H1 (cell line): ENCODE measurements at regions of chr5 and their contacts with region 1.

Region 1: GRCh38 chr5:154520861-154521453 is 42.9 kb upstream of the HAND1 start:
- DNase-seq: peak; percentile 82 to 93
- H3K4me3 ChIP-seq: peak overlapping the region; percentile 16 to 58 (median 36); a peak in 7 of 8 replicates
- H3K27ac ChIP-seq: peak overlapping the region; percentile 65; the same call in 1 of the 2 replicates
- H3K4me1 ChIP-seq: peaks cover 0 to 7% (median under 1%) of the 10 kb centered on the region in 4 experiments; a peak in 4 of 7 replicates
- H3K27me3 ChIP-seq: peaks cover 0 to 4% (median 3%) of the 10 kb centered on the region in 4 experiments; a peak in 2 of 7 replicates
- CTCF ChIP-seq: peak; percentile 79 to 83 (median 80)
- EP300 ChIP-seq: no peak
- POLR2A ChIP-seq: no peak
- RAD21 ChIP-seq: peak; percentile 59 to 72

Region 2: GRCh38 chr5:154345255-154345952 is 175.6 kb before region 1 on chr5:
- CTCF ChIA-PET with region 1: no interaction called
- POLR2A ChIA-PET with region 1: no interaction called
- DNase-seq: no peak
- H3K4me3 ChIP-seq: no peak overlapping the region
- H3K27ac ChIP-seq: no peak overlapping the region
- H3K4me1 ChIP-seq: no peaks in the 10 kb centered on the region
- H3K27me3 ChIP-seq: no peaks in the 10 kb centered on the region
- CTCF ChIP-seq: no peak
- EP300 ChIP-seq: no peak
- POLR2A ChIP-seq: no peak
- RAD21 ChIP-seq: no peak

Region 3: DNA sequence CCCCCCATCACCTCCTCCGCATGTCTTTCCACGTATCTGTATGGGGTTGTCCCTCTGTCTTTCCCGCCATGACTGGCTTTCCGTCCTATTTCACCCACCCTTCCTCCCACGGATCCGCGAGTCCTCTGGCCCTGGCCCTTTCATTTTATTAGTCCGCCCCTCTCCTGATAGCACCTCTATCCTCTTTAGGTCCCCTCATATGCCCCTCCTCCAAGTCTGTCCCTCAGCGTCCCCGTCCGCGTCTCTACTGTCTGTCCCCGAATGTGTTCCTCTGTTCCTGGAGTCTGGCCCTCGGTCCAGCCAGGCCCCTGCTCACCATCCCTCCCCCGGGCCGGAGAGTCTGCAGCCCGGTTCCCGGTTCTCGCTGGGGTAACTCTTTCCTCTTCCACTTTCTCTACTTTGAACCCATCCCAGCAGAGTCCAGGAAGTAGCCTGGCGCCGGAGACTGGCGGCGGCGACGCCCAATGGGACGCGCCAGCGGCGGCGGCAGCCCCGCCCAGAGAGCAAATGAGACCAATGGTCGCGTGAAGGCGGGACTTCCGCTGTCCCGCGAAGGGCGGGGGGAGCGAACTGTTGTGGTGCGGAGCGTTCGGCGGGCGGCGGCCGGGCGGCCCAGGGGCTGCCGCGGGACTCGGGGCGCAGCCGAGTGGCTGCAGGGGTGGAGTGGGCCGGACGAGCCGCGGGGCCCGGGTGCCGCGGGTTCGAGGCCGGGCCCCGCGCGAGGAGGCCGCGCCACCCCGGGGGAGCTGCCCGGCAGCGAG is 75.4 kb before region 1 on chr5 and contains the start of gene SAP30L:
- CTCF ChIA-PET with region 1: interaction called, 11 read pairs
- POLR2A ChIA-PET with region 1: no interaction called
- DNase-seq: peak; percentile 68 to 99
- H3K4me3 ChIP-seq: peak within 1 kb of the TSS; percentile 80 to 93 (median 92)
- H3K27ac ChIP-seq: no peak within 1 kb of the TSS
- H3K4me1 ChIP-seq: peaks cover 0 to 7% (median 2%) of the 10 kb centered on the region in 4 experiments; a peak in 3 of 7 replicates
- H3K27me3 ChIP-seq: peaks cover 0 to 3% (median 0%) of the 10 kb centered on the region in 4 experiments; a peak in 1 of 7 replicates
- CTCF ChIP-seq: no peak
- EP300 ChIP-seq: no peak
- POLR2A ChIP-seq: no peak
- RAD21 ChIP-seq: no peak
- total RNA-seq, gene SAP30L: 26.3 and 31.5 TPM in 2 replicates

Region 4: GRCh38 chr5:154478224-154478565 is 42.8 kb before region 1 on chr5 and contains the start of gene HAND1:
- CTCF ChIA-PET with region 1: interaction called, 18 read pairs
- POLR2A ChIA-PET with region 1: interaction called, 6 read pairs
- DNase-seq: peak in 1 of 2 experiments; percentile 93
- H3K4me3 ChIP-seq: peak within 1 kb of the TSS; percentile 27 to 58 (median 38); a peak in 7 of 8 replicates
- H3K27ac ChIP-seq: no peak within 1 kb of the TSS
- H3K4me1 ChIP-seq: peaks cover 26 to 62% (median 34%) of the 10 kb centered on the region in 4 experiments
- H3K27me3 ChIP-seq: peaks cover 96 to 100% (median 99%) of the 10 kb centered on the region in 4 experiments
- CTCF ChIP-seq: no peak
- EP300 ChIP-seq: no peak
- POLR2A ChIP-seq: no peak
- RAD21 ChIP-seq: no peak
- total RNA-seq, gene HAND1: not detected in 2 replicates

Region 5: DNA sequence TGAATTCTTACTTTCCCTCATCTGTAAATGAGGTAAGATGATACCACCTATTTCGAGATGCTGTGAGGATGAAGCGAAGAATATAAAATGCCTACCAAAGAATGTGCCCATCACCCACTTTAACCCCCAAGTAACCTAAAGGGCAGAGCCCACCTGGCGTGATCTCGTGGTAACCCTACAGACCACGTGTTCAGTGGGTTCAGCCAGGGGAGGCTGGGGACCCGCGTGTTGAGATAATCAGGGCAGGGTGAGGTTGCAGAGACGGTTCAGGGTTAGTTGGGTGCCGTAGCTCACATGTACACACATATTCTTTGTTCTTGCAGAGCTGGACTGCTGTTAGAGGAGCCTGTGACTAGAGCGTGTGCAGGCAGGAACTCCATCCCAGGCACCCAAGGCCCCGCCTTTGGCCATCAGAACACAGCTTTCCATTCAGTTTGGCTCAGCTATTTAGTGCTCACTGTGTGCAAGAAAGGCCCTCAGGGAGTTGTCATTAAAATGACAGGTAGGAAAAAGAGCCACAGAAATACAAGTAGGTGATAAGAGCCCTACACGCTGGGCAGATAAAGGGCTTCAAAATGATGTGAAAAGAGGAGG is 13.6 kb after region 1 on chr5:
- CTCF ChIA-PET with region 1: interaction called, 19 read pairs
- POLR2A ChIA-PET with region 1: interaction called, 4 read pairs
- DNase-seq: peak in 1 of 2 experiments; percentile 39
- H3K4me3 ChIP-seq: no peak overlapping the region
- H3K27ac ChIP-seq: no peak overlapping the region
- H3K4me1 ChIP-seq: no peaks in the 10 kb centered on the region
- H3K27me3 ChIP-seq: no peaks in the 10 kb centered on the region
- CTCF ChIP-seq: no peak
- EP300 ChIP-seq: no peak
- POLR2A ChIP-seq: no peak
- RAD21 ChIP-seq: no peak

Region 6: GRCh38 chr5:154583545-154584496 is 62.9 kb after region 1 on chr5:
- CTCF ChIA-PET with region 1: interaction called, 10 read pairs
- POLR2A ChIA-PET with region 1: no interaction called
- DNase-seq: no peak
- H3K4me3 ChIP-seq: no peak overlapping the region
- H3K27ac ChIP-seq: no peak overlapping the region
- H3K4me1 ChIP-seq: peaks cover 0 to 2% (median 0%) of the 10 kb centered on the region in 4 experiments; a peak in 1 of 7 replicates
- H3K27me3 ChIP-seq: no peaks in the 10 kb centered on the region
- CTCF ChIP-seq: no peak
- EP300 ChIP-seq: no peak
- POLR2A ChIP-seq: no peak
- RAD21 ChIP-seq: no peak

Region 7: DNA sequence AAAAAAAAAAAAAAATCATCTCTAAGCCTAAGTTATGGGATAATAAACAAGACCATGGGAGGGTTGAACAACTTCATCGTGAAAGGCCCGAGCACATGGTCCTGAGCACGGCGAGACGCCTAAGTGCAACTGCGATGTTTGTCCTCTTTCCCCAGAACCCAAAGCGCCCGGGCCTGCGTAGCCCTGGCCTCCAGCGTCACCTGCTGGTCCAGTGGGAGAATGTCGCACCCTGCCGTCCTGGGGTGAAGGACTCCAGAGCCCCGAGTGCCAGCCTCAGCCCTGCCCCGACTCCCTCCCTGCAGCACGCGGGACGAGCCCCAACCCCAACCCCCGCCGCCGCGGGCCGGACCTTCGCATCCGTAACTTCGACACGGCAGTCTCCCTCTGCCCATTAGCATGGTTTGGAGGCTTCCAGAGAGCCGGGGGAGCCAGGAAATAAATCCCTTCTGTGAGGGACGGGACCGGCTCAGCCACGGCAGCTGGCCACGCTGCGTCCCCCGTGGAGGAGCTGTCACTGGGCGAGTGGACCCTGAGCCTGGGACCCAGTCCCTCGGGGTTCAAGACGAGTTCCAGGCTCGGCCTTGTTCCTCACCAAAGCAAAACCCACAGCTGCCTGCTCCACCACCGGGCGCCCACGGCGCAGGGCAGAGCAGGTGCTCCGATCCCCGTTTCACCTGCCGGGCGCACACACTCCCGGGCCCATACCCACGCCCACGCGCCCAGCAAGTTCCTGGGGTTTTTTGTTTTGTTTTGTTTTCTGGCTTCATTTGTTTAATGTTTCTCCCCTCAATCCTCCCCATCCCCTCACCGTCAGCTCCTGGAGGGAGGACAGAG is 89.6 kb after region 1 on chr5:
- CTCF ChIA-PET with region 1: interaction called, 62 read pairs
- POLR2A ChIA-PET with region 1: interaction called, 6 read pairs
- DNase-seq: peak; percentile 75 to 93
- H3K4me3 ChIP-seq: peak overlapping the region; percentile 4 to 75 (median 50); a peak in 7 of 8 replicates
- H3K27ac ChIP-seq: no peak overlapping the region
- H3K4me1 ChIP-seq: peaks cover 6 to 8% (median 8%) of the 10 kb centered on the region in 4 experiments; a peak in 6 of 7 replicates
- H3K27me3 ChIP-seq: peaks cover 9 to 36% (median 33%) of the 10 kb centered on the region in 4 experiments
- CTCF ChIP-seq: peak; percentile 98 to 100 (median 98)
- EP300 ChIP-seq: 0 out of 3 replicates have a peak, but pooled peaks of 1 of the 2 experiments have one; percentile 47
- POLR2A ChIP-seq: no peak
- RAD21 ChIP-seq: peak; percentile 100